ENCODE measurements at regions of chr18 and their contacts with region 1.

Region 1: GRCh38 chr18:63987743-63988142 is 17.9 kb downstream of the SERPINB8 start:
- DNase-seq: no peak
- ATAC-seq: no peak
- H3K4me3 ChIP-seq: no peak overlapping the region
- H3K4me3 Mint-ChIP-seq: no peak overlapping the region
- H3K27ac ChIP-seq: no peak overlapping the region
- H3K27ac Mint-ChIP-seq: no peak overlapping the region
- H3K4me1 ChIP-seq: no peaks in the 10 kb centered on the region
- H3K4me1 Mint-ChIP-seq: no peaks in the 10 kb centered on the region
- H3K27me3 ChIP-seq: no peaks in the 10 kb centered on the region
- H3K27me3 Mint-ChIP-seq: no peaks in the 10 kb centered on the region
- CTCF ChIP-seq: no peak

Region 2: GRCh38 chr18:63951302-63951705 is 36.4 kb before region 1 on chr18:
- CTCF ChIA-PET with region 1: no interaction called
- POLR2A ChIA-PET with region 1: no interaction called
- intact Hi-C with region 1: loop called in 1 of 2 experiments (anchors 5 kb)
- DNase-seq: no peak
- ATAC-seq: no peak
- H3K4me3 ChIP-seq: no peak overlapping the region
- H3K4me3 Mint-ChIP-seq: no peak overlapping the region
- H3K27ac ChIP-seq: no peak overlapping the region
- H3K27ac Mint-ChIP-seq: no peak overlapping the region
- H3K4me1 ChIP-seq: peaks cover 7% of the 10 kb centered on the region
- H3K4me1 Mint-ChIP-seq: peaks cover 16% of the 10 kb centered on the region
- H3K27me3 ChIP-seq: peaks cover 0 to 12% of the 10 kb centered on the region in 2 experiments
- H3K27me3 Mint-ChIP-seq: peaks cover 31% of the 10 kb centered on the region
- CTCF ChIP-seq: no peak

Measured in CD4-positive, alpha-beta T cell (primary cell).